Panc1 (cell line): ENCODE measurements at regions of chr19 and their contacts with region 1.

Region 1: DNA sequence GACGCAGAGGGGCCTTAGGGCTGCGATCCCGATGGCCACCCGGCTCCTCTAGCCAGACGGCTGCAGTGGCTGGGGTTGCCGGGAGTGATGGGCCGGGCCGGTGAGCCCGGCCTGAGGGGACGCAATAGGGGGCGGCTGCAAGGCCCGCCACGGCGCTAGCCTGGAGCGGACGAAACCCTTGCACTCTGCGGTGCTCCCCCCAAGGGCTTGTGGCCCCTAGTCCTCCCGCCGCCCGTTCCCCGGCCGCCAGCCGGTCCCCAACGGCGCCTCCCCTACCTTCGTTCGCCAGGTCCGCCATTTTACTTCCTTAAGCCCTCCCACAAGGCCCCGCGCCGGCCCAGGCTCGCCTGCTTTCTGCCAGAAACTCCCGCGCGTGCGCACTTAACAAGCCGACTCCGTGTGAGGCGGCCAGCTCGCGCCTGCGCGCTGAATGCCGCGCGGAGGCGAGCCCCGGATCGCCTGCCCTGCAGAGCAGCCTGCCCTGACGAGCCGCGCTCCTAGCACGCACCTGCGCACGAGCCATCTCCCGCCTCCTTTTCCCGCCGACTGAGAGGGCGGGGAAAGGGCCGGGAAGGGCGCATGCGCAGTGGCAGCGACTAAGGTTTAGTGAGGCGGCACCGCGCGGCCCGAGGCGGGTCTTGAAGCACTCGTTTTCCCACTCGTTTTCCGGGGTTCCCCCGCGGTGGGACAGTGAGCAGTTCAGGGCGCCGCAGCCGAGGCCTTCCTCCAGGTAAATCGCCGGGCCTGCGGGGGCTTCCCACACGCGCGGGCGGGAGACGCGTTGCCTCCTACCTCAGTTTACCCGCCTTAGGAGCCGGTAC is at the start of gene RANBP3:
- DNase-seq: peak; percentile 89
- ATAC-seq: peak; percentile 97
- H3K4me3 ChIP-seq: peak within 1 kb of the TSS; percentile 82
- H3K27ac ChIP-seq: peak within 1 kb of the TSS; percentile 85
- H3K4me1 ChIP-seq: peaks cover 7% of the 10 kb centered on the region
- H3K27me3 ChIP-seq: no peaks in the 10 kb centered on the region
- CTCF ChIP-seq: no peak
- total RNA-seq, gene RANBP3: 54.6 TPM

Region 2: DNA sequence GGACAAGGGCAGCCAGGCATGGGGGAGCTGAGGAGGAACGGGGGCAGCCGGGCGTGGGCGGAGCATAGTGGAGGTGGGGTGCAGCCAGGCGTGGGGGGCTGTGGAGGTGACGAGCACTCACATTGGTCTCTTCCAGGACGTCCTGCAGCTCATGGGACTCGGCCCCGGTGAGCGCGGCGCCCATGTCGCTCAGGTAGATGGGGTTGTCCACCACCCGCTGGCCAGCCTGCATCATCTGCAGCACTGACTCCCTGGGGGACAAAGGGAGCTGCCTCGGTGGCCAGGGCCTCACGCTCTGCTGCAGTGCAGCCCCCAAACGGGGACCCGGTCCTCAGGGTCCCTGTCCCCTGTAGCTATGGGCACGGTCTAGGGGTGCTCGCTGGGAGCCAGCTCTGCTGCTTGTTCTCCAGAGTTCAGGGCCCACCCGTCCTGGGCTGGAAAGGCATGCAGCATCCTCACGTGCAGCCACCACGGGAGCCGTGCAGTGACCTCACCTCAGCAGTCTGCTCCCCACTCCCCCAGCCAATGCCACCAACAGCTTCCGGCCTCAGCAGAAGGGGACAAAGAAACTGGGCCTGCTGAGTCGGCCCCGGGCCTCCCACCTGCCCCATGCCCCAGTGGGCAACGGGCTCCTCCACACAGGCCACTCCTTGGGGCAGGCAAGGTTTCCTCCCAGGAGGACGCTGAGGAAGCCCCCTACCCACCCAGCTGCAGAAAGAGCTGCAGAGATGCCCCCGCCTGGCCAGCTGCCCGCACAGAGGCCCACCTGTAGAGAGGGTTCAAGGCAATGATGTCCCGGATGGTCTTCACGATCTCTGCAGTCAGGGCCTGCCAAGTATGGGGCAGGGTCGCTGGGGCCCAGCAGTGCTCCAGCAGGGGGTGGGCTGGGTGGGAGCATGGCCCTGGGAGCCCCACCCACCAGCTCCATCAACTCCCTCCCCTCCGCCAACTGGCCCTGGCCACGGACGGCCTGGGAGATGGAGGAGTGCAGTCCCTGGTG is 270.1 kb before region 1 on chr19:
- CTCF ChIA-PET with region 1: no interaction called
- POLR2A ChIA-PET with region 1: no interaction called
- in situ Hi-C with region 1: no loop called
- intact Hi-C with region 1: no loop called
- DNase-seq: no peak
- ATAC-seq: no peak
- H3K4me3 ChIP-seq: no peak overlapping the region
- H3K27ac ChIP-seq: no peak overlapping the region
- H3K4me1 ChIP-seq: no peaks in the 10 kb centered on the region
- H3K27me3 ChIP-seq: no peaks in the 10 kb centered on the region
- CTCF ChIP-seq: no peak

Region 3: DNA sequence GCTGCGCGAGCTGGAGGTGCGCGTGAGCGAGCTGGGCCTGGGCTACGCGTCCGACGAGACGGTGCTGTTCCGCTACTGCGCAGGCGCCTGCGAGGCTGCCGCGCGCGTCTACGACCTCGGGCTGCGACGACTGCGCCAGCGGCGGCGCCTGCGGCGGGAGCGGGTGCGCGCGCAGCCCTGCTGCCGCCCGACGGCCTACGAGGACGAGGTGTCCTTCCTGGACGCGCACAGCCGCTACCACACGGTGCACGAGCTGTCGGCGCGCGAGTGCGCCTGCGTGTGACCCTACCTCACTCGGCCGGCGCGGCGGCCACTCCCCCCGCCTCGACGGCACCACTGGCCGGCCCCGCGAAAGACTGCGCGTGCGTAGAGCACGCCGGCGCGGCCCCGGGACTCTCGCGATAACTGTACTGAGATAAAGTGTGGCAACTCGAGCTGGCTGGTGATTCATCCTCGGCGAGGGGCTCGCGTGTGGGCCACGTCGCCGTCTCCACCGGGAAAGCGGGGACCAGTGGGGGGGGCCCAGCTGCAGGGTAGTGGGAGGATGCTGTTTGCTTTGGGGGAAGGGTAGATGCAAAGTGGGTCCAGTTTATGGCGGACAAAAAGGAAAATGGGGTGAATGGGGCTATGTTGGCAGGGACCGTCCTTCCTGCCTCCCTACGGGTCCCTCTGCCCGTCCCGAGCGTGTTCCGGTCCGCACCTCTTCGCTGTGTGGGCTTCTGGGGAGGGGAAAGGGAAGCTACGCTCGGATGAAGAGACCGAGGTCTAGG is 149.9 kb before region 1 on chr19:
- CTCF ChIA-PET with region 1: no interaction called
- POLR2A ChIA-PET with region 1: no interaction called
- in situ Hi-C with region 1: no loop called
- intact Hi-C with region 1: no loop called
- DNase-seq: peak; percentile 67
- ATAC-seq: peak; percentile 83
- H3K4me3 ChIP-seq: peak overlapping the region; percentile 55 to 86
- H3K27ac ChIP-seq: peak overlapping the region; percentile 80
- H3K4me1 ChIP-seq: peaks cover 8% of the 10 kb centered on the region
- H3K27me3 ChIP-seq: no peaks in the 10 kb centered on the region
- CTCF ChIP-seq: no peak

Region 4: GRCh38 chr19:6038634-6039405 is 60.8 kb after region 1 on chr19:
- CTCF ChIA-PET with region 1: no interaction called
- POLR2A ChIA-PET with region 1: interaction called, 12 read pairs
- in situ Hi-C with region 1: no loop called
- intact Hi-C with region 1: no loop called
- DNase-seq: no peak
- ATAC-seq: no peak
- H3K4me3 ChIP-seq: no peak overlapping the region
- H3K27ac ChIP-seq: no peak overlapping the region
- H3K4me1 ChIP-seq: no peaks in the 10 kb centered on the region
- H3K27me3 ChIP-seq: no peaks in the 10 kb centered on the region
- CTCF ChIP-seq: no peak